ENCODE measurements at regions of chr5 and their contacts with region 1.

Region 1: GRCh38 chr5:38193015-38193581 is 65.3 kb upstream of the EGFLAM start:
- DNase-seq: peak; percentile 29 to 69
- ATAC-seq: peak; percentile 85

Region 2: DNA sequence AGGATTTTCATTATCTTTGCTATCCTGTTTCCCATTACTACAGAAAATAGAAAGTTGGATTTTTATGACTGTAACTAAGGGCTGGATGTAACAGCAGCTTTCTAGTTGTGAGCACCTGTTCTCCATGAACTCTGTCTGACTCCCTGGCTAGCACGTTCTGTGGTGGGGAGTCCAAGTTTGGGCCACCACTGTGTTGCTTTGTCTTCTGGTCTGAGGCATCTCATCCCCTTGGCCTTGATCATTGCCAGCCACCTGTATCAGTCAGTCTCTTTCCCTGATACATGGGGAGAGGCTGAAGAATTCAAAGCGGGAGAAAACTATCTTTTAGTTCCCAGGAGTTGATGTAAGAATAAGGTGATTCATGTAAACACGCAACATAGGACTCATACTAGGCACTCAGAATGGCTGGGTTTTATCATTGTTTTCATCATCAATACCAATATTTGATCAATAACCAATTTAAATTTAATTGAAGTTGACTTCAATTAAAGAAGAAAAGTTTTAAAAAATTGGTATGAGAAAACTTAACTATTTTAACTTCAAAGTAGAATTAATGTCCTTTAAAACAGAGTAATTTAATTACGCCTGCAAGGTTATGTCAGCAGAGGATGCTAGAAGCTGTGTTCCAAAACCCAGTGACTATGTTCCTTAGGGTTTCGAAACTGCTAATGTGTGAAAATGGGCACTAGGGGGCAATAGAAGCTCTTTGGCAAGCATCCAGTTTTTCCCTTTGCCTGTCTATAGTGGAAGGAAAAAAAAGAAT is 780.4 kb before region 1 on chr5:
- intact Hi-C with region 1: loop called in 1 of 2 experiments (anchors 5 kb)
- DNase-seq: peak; percentile 29 to 36
- ATAC-seq: peak; percentile 97

Region 3: DNA sequence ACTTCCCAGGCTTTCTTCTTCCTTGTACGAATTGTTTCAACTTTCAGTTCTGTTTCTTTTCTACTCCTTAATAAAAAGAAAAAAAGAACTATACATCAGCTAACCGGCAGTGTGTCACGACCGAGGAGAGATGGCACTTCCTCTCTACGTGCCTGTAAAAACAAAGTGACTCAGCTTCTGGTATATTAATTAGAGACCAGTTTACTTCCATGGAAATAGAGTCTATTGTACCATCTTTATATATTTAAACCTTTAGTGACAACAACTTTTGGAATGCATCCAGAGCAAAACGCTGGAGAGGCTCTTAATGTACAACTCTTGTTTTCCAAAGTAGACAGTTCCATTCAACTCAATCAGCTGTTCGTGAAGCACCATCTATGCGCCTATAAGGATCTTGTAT is 457.8 kb after region 1 on chr5:
- intact Hi-C with region 1: no loop called
- DNase-seq: no peak
- ATAC-seq: no peak

Measured in left colon (tissue), 2 donors.